Left colon (tissue), 2 donors: ENCODE measurements at regions of chr5 and their contacts with region 1.

Region 1: GRCh38 chr5:493758-494157 is 30.5 kb downstream of the SLC9A3 start:
- DNase-seq: no peak
- ATAC-seq: no peak

Region 2: GRCh38 chr5:518721-519120 is 25.0 kb after region 1 on chr5:
- intact Hi-C with region 1: loop called in 1 of 2 experiments (anchors 1 kb)
- DNase-seq: peak; percentile 67 to 79
- ATAC-seq: peak; percentile 82